Caco-2 (cell line): ENCODE measurements at regions of chr19 and their contacts with region 1.

Region 1: GRCh38 chr19:54137086-54137921 is at the start of gene CNOT3:
- DNase-seq: peak; percentile 100
- H3K4me3 ChIP-seq: peak within 1 kb of the TSS; percentile 96
- H3K4me3 Mint-ChIP-seq: peak within 1 kb of the TSS; percentile 88
- H3K27ac Mint-ChIP-seq: peak within 1 kb of the TSS; percentile 82
- H3K4me1 ChIP-seq: peaks cover 9% of the 10 kb centered on the region
- H3K4me1 Mint-ChIP-seq: peaks cover 14% of the 10 kb centered on the region
- H3K27me3 ChIP-seq: no peaks in the 10 kb centered on the region
- H3K27me3 Mint-ChIP-seq: no peaks in the 10 kb centered on the region
- CTCF ChIP-seq: no peak
- total RNA-seq, gene CNOT3: 77.7 and 82.1 TPM in 2 replicates

Region 2: GRCh38 chr19:53867225-53868090 is 269.8 kb before region 1 on chr19 and contains the start of gene MYADM:
- CTCF ChIA-PET with region 1: no interaction called
- POLR2A ChIA-PET with region 1: interaction called, 13 read pairs
- intact Hi-C with region 1: loop called (anchors 5 kb)
- DNase-seq: peak; percentile 99
- H3K4me3 ChIP-seq: peak within 1 kb of the TSS; percentile 99
- H3K4me3 Mint-ChIP-seq: peak within 1 kb of the TSS; percentile 97
- H3K27ac Mint-ChIP-seq: peak within 1 kb of the TSS; percentile 100
- H3K4me1 ChIP-seq: peaks cover 37% of the 10 kb centered on the region
- H3K4me1 Mint-ChIP-seq: peaks cover 38% of the 10 kb centered on the region
- H3K27me3 ChIP-seq: no peaks in the 10 kb centered on the region
- H3K27me3 Mint-ChIP-seq: no peaks in the 10 kb centered on the region
- CTCF ChIP-seq: no peak
- total RNA-seq, gene MYADM: 115 and 132 TPM in 2 replicates

Region 3: DNA sequence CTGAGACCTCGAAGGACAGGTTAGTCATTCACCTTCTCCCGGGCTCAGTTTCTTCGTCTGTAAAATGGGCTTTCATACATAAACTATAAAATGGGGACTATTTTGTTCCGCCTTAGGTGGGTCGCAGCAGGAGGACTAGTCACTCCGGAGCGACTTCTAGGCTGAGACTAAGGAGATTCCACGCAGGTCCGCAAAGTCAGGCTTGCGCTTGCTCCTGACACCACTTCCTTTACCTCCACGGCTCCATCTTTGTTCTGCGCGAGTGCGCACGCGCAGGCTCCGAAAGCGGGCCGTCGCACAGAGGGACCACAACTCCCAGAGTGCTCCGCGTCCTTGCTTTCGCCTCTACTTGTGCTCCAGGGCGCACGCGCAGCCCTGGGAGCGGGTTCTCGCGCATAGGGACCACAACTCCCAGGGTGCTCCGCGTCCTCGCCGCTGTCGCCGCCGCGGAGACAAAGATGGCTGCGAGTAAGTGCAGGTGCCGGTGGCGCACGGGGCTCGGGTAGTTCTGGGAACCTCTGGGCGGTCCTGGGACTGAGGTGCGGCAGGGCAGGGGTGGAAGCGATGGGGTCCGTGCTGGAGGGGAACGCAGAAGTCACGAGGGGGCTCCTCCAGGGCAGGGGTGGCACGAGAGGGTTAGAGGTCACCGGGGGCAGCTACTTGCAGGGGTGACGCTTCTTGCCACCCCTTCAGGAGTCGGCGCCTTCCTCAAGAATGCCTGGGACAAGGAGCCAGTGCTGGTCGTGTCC is 34.7 kb before region 1 on chr19 and contains the start of gene NDUFA3:
- CTCF ChIA-PET with region 1: no interaction called
- POLR2A ChIA-PET with region 1: interaction called, 6 read pairs
- intact Hi-C with region 1: loop called (anchors 1 kb)
- DNase-seq: peak; percentile 99
- H3K4me3 ChIP-seq: peak within 1 kb of the TSS; percentile 85
- H3K4me3 Mint-ChIP-seq: peak within 1 kb of the TSS; percentile 92
- H3K27ac Mint-ChIP-seq: peak within 1 kb of the TSS; percentile 90
- H3K4me1 ChIP-seq: no peaks in the 10 kb centered on the region
- H3K4me1 Mint-ChIP-seq: peaks cover 10% of the 10 kb centered on the region
- H3K27me3 ChIP-seq: no peaks in the 10 kb centered on the region
- H3K27me3 Mint-ChIP-seq: no peaks in the 10 kb centered on the region
- CTCF ChIP-seq: no peak
- total RNA-seq, gene NDUFA3: 185 and 196 TPM in 2 replicates

Region 4: DNA sequence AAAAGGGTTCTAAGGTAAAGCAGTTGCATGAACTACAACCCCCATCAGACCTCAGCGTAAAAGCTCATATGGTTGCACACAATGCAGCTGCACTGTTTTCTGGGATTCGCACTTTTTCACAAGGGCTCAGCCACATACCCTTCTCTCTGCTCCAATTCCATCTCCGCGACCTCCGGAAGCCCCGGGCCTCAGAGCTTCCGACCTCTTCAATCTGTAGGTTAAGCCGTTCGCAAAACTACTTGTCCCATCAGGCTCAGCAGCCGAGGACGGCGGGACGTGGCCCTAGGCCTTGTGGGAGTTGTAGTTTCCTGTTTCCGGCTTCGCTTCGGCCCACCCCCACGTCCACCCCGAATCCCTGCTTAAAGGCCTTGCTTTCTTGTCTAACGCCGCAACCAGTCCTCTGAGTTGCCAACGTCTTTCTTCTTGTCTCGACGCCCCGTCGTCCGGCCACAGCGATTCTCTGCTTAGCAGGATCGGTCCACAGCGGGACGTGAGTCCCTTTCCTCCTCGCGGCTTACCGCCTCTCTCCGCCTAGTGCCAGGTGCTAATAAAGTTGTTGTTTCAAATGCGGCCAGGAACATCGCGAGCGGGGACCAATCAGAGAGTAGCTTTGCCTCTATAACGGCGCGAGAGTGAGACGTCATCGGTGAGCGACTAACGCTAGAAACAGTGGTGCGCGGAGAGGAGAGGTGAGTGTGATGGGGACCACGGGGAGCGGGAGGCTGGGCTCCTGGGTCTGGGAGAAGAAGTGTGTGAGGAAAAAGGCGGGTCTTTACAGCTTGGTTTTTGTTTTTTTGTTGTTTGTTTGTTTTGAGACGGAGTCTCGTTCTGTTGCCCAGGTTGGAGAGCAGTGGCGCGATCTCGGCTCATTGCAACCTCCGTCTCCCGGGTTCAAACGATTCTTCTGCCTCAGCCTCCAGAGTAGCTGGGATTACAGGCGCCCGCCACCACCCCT is 21.9 kb before region 1 on chr19 and contains the starts of genes PRPF31 and TFPT:
- CTCF ChIA-PET with region 1: interaction called, 5 read pairs
- POLR2A ChIA-PET with region 1: interaction called, 31 read pairs
- intact Hi-C with region 1: loop called (anchors 1 kb)
- DNase-seq: peak; percentile 95 to 98
- H3K4me3 ChIP-seq: peak within 1 kb of the TSS; percentile 43
- H3K4me3 Mint-ChIP-seq: peak within 1 kb of the TSS; percentile 95
- H3K27ac Mint-ChIP-seq: peak within 1 kb of the TSS; percentile 96
- H3K4me1 ChIP-seq: 0 out of 2 replicates have a peak, but pooled peaks cover 7% of the 10 kb centered on the region
- H3K4me1 Mint-ChIP-seq: peaks cover 16% of the 10 kb centered on the region
- H3K27me3 ChIP-seq: no peaks in the 10 kb centered on the region
- H3K27me3 Mint-ChIP-seq: no peaks in the 10 kb centered on the region
- CTCF ChIP-seq: no peak
- total RNA-seq, gene PRPF31: 95.0 and 99.0 TPM in 2 replicates
- total RNA-seq, gene TFPT: 23.0 and 26.0 TPM in 2 replicates

Region 5: DNA sequence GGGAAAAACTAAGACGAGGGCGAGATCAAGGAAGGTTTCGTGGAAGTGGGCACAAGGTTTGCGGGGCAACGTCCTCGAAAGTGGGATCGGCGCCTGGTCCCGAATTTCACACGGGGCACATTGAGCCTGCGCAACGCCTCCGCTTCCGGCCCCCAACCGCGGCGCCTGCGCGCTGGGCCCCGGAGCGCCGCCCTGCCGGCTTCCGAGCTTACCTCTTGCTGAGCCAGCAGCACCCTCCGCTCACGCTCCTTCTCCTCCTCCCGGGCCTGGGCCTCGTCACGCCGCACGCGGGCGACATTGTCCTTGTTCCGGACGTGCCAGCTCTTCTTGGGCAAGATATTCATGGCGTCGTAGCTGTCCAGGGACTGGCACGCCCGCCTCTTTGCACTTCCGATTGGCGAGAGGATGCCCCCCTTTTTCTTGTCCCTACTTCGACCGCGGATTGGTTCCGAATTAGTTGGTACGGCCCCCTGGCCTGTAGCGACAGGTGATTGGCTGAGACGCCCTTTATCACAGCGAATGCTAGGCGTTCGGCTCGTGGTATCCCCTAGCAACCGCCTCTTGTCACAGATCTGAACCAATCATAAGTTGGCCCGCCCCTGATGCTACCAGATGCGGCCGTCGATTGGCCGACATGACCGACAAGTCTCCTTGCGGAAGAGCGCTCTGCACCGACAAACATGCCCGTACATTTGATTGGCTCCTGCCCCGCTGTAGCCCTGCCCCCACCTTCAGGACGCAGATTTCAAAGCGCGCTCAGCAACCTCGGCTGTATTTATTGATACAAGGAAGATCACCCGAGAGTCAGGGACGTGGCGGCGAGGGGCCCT is 22.3 kb after region 1 on chr19 and contains the start of gene LENG1:
- CTCF ChIA-PET with region 1: interaction called, 14 read pairs
- POLR2A ChIA-PET with region 1: interaction called, 30 read pairs
- intact Hi-C with region 1: loop called (anchors 1 kb)
- DNase-seq: peak; percentile 99 to 100
- H3K4me3 ChIP-seq: peak within 1 kb of the TSS; percentile 62
- H3K4me3 Mint-ChIP-seq: peak within 1 kb of the TSS; percentile 79
- H3K27ac Mint-ChIP-seq: peak within 1 kb of the TSS; percentile 87
- H3K4me1 ChIP-seq: peaks cover 24% of the 10 kb centered on the region
- H3K4me1 Mint-ChIP-seq: peaks cover 39% of the 10 kb centered on the region
- H3K27me3 ChIP-seq: no peaks in the 10 kb centered on the region
- H3K27me3 Mint-ChIP-seq: no peaks in the 10 kb centered on the region
- CTCF ChIP-seq: peak in 1 of 2 experiments; percentile 34
- total RNA-seq, gene LENG1: 6.6 and 6.9 TPM in 2 replicates

Region 6: DNA sequence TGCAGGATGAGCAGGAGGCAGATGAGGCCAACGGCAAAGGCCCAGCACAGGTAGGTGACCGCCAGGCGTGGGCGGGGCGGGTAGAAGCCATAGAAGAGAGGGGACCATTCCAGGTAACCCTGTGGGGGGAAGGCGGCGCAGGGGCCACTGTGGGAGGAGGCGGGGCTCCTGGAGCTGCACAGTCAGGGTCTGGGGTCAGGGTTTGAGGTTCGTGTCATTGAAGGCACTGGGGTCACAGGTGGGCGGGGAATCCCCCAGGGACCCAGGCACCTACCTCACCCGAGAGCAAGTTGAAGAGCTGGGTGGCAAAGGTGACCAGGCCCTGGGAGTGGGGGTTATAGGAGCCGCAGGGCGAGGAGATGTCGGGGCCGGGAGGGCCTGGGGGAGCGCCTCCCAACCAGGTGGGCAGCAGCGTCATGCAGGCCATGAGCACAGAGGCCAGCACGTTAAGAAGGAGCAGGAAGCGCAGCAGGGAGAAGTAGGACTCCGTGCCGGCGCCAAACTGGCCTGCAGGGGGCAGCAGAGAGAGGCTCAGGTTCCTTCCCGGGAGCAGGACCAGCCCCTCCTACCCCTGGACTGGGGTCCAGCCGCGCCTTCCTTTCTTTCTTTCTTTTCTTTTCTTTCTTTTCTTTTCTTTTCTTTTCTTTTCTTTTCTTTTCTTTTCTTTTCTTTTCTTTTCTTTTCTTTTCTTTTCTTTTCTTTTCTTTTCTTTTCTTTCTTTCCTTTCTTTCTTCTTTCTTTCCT is 31.0 kb after region 1 on chr19:
- CTCF ChIA-PET with region 1: interaction called, 16 read pairs
- POLR2A ChIA-PET with region 1: interaction called, 7 read pairs
- intact Hi-C with region 1: loop called (anchors 1 kb)
- DNase-seq: peak; percentile 90 to 95
- H3K4me3 ChIP-seq: no peak overlapping the region
- H3K4me3 Mint-ChIP-seq: no peak overlapping the region
- H3K27ac Mint-ChIP-seq: no peak overlapping the region
- H3K4me1 ChIP-seq: peaks cover 1% of the 10 kb centered on the region
- H3K4me1 Mint-ChIP-seq: peaks cover 30% of the 10 kb centered on the region
- H3K27me3 ChIP-seq: no peaks in the 10 kb centered on the region
- H3K27me3 Mint-ChIP-seq: no peaks in the 10 kb centered on the region
- CTCF ChIP-seq: peak; percentile 90 to 92